Activated CD4-positive, alpha-beta memory T cell treated with anti-CD3 and anti-CD28 coated beads for 36 hours (primary cell): ENCODE measurements at regions of chr5 and their contacts with region 1.

Region 1: DNA sequence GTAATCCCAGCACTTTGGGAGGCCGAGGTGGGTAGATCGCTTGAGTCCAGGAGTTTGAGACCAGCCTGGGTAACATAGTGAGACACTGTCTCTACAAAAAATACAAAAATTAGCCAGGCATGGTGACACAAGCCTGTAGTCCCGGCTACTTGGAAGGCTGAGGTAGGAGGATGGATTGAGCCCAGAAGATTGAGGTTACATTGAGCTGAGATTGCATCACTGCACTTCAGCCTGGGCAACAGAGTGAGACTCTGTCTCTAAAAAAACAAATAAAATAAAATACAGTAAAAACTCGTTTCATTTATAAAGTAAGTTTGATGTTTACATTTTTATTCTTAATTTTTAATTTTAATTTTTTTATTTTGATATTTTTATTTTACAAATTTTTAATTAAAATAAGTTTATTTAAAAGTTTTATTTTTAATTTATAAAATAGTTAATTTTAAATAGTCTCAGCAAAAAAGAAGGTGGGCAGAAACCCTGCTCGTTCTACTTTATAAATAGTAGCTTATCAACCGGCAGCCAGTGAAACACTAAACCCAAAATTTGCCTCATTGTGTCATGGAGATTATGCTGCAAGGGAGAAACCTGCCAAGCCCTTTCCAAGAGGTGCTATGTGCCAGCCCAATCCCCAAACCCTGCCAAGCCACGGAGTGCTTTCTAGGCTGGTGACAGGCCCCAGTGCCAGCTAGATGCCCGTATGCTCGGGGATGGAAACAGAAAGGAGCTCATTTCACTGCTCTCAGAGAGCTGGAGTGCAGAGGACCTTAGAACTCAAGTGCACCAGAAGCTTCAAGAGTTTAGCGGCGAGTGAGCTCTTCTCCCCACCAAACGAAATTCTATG is 38.9 kb downstream of the SERINC5 start:
- DNase-seq: peak; percentile 64
- H3K4me3 Mint-ChIP-seq: peak overlapping the region; percentile 73
- H3K27ac Mint-ChIP-seq: peak overlapping the region; percentile 91
- H3K4me1 Mint-ChIP-seq: peaks cover 85% of the 10 kb centered on the region
- H3K27me3 Mint-ChIP-seq: no peaks in the 10 kb centered on the region

Region 2: DNA sequence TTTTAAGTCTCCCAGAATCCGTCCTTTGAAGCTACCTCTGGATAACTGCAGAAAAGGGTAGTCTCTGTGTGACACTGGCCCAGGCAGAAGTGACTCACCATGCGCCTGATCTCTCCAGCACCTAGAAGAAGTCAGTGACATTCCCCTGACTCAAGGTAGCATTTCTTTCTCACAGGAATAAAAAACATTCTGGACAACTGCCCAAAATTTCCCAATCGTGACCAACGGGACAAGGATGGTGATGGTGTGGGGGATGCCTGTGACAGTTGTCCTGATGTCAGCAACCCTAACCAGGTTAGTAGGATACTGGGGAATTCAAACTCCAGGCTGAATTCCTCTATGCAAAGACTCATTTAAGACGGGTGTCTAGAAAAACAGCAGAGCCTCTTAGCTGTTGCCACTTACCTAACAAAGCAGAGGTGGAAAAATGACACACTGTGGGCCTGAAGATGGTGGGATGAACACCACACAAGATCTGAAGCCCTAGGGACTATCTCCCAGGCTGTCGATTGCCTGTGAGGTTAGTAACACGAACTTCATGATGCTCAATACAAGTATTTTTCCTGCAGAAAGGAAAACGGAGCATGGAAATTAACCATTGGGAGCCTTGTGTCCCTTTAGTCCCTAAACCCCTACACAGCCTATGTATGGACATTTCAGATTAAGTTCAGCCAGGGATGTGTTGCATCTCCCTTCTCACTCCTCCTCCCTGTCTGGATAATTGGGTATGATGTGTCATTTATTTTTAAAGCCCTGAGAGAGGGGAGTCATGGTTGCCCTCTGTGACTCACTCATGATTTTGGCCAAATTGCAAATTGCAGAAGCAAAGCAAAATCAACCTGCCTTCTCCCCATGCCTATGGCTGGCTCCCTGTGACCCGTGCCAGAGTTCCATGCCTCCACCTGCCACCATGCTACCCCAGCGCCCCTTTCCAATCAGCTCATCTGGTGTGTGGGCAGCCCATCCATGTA is 144.6 kb before region 1 on chr5:
- CTCF ChIA-PET with region 1: no interaction called
- POLR2A ChIA-PET with region 1: no interaction called
- intact Hi-C with region 1: no loop called
- DNase-seq: no peak
- H3K4me3 Mint-ChIP-seq: no peak overlapping the region
- H3K27ac Mint-ChIP-seq: no peak overlapping the region
- H3K4me1 Mint-ChIP-seq: no peaks in the 10 kb centered on the region
- H3K27me3 Mint-ChIP-seq: no peaks in the 10 kb centered on the region

Region 3: GRCh38 chr5:80231243-80231642 is 14.3 kb after region 1 on chr5:
- CTCF ChIA-PET with region 1: no interaction called
- POLR2A ChIA-PET with region 1: interaction called, 6 read pairs
- intact Hi-C with region 1: loop called (anchors 1 kb)
- DNase-seq: peak; percentile 55
- H3K4me3 Mint-ChIP-seq: no peak overlapping the region
- H3K27ac Mint-ChIP-seq: peak overlapping the region; percentile 67
- H3K4me1 Mint-ChIP-seq: peaks cover 73% of the 10 kb centered on the region
- H3K27me3 Mint-ChIP-seq: no peaks in the 10 kb centered on the region

Region 4: DNA sequence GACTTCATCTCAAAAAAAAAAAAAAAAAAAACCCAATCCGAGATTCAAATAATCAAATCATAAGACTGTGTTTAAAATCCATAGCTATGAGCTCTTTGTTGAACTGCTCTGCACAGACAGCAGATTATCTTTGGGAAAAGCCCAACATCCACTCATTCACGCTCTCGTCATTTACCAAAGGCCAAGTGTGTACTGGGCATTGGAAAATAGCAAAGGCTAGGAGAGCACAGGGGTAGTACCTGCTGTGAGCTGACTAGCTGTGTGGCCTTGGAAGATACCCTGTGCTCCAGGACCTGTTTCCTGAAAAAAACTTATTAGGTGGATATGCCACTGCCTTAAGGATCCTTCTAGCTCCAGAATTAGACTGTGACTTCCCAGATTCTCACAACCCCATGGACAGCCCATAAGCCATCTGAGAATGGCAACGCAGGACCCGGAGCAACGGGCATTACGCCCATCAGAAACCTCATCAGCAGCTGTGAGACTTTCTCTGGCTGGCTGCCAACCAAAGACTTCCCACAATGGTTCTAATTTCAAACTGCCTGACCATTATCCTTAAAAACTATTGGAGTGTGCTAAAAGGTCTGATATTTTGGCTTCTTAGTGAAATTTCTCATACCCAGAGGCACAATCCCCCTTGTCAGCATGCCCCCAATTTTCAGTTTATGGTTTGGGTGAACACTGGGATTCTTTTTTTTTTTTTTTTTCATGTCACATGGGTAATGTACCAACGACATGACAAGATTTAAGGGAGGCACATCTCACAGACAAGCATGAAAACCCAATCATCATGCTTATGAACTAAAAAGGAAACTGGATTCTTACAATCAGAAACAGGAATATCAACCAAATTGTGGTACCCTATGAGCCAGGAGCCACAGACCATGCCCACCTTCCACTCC is 22.1 kb after region 1 on chr5:
- CTCF ChIA-PET with region 1: no interaction called
- POLR2A ChIA-PET with region 1: interaction called, 10 read pairs
- intact Hi-C with region 1: loop called (anchors 2 kb)
- DNase-seq: peak; percentile 7
- H3K4me3 Mint-ChIP-seq: peak overlapping the region; percentile 33
- H3K27ac Mint-ChIP-seq: peak overlapping the region; percentile 75
- H3K4me1 Mint-ChIP-seq: peaks cover 76% of the 10 kb centered on the region
- H3K27me3 Mint-ChIP-seq: no peaks in the 10 kb centered on the region

Region 5: DNA sequence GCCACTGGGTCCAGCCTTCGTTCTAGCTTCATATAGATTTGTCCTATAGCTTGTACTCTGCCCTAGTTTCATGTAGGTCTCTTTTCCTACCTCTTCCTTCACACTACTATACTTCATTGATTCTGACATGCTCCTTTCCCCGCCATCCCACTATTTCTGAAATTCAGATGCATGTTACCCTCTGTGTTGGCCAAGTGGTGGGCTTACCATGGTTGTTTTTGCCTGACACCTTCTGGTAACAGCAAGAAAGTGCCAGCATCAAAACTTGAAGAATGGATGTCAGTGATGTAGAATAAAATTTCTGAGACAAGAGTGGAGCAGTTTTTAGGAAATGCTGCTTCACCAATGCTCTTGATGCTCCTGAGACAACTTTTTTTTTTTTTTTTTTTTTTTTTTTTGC is 58.4 kb after region 1 on chr5:
- CTCF ChIA-PET with region 1: interaction called, 3 read pairs
- POLR2A ChIA-PET with region 1: no interaction called
- intact Hi-C with region 1: loop called (anchors 2 kb)
- DNase-seq: peak; percentile 27
- H3K4me3 Mint-ChIP-seq: no peak overlapping the region
- H3K27ac Mint-ChIP-seq: no peak overlapping the region
- H3K4me1 Mint-ChIP-seq: peaks cover 18% of the 10 kb centered on the region
- H3K27me3 Mint-ChIP-seq: no peaks in the 10 kb centered on the region